HEK293 (cell line): ENCODE measurements at regions of chr9 and their contacts with region 1.

Region 1: DNA sequence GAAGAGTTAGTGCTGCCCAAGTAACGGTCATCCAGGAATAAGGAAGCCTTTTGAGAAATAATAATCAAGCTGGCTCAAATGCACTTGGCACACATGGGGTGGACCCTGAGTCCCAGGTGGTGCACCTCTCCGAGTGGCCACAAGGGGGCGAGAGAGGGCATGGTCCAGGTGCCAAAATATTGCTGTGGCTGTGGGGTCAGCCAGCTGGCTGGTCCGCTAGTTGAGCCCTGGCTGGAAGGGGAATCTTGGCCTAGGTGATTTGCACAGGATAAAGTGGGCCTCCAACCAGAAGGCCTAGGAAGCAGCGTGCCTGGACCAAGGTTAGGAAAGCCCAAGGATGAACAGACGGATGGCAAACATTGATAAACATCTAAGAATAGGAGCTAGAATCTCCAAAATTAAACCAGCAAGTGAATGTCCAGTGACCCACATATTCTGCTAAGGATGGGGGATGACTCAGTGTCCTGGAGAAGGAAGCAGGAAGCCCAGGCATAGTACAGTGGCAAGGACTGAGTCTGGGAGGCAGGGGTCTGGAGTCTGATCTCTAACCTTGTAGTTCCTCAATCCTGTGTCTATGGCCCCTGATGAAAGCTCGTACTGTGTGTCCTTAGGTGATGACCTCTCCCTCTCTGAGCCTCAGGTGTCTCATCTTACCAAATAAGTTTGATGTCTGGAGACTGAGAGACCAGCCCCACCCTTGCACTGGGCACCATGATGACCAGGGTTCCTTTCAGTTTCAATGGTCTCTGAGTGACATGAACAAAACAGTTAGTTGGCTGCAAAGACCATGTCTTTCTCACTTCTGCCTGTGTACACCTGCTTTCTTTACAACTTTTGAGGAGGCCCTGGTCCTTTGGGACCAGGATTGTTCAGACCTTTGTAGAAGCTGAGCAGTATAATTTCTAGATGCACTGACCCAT is 19.2 kb upstream of the SHB start:
- H3K4me3 ChIP-seq: no peak overlapping the region
- H3K27ac ChIP-seq: no peak overlapping the region
- H3K4me1 ChIP-seq: no peaks in the 10 kb centered on the region
- CTCF ChIP-seq: peak; percentile 64

Region 2: GRCh38 chr9:37913480-37914153 is 174.6 kb before region 1 on chr9:
- CTCF ChIA-PET with region 1: interaction called, 66 read pairs
- POLR2A ChIA-PET with region 1: interaction called, 7 read pairs
- H3K4me3 ChIP-seq: no peak overlapping the region
- H3K27ac ChIP-seq: no peak overlapping the region
- H3K4me1 ChIP-seq: no peaks in the 10 kb centered on the region
- CTCF ChIP-seq: peak; percentile 94

Region 3: DNA sequence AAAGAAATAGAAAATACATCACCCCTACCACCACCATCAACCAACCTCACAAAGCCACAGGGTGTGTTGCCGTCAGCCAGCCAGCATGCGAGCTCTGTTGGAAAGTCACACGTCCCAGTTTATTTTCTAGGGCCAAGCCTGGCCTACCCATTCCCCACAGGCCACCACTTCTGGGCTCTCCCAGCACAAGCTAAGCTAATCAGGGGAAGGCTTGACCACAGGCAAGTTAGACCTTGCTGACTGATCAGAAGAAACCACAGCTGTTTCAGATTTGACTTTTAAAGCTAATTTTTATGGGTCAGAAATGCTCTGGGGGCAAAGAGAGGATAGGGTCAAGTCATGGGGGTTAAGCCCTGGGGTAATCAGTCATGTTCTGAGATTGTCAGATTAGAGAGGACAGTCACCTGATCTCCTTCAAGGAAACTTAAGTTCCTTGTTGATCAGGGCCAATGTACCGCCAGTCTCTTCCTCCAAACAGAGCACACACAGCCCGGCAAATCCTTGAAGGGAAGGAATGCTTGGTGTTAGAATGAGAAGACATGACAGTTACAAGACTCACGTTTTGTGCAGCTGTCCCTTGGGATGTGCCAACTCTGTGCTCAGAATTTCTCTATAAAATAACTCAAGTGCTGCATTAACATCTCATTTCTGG is 26.8 kb before region 1 on chr9:
- CTCF ChIA-PET with region 1: no interaction called
- POLR2A ChIA-PET with region 1: no interaction called
- H3K4me3 ChIP-seq: no peak overlapping the region
- H3K27ac ChIP-seq: no peak overlapping the region
- H3K4me1 ChIP-seq: peaks cover 5% of the 10 kb centered on the region
- CTCF ChIP-seq: no peak

Region 4: DNA sequence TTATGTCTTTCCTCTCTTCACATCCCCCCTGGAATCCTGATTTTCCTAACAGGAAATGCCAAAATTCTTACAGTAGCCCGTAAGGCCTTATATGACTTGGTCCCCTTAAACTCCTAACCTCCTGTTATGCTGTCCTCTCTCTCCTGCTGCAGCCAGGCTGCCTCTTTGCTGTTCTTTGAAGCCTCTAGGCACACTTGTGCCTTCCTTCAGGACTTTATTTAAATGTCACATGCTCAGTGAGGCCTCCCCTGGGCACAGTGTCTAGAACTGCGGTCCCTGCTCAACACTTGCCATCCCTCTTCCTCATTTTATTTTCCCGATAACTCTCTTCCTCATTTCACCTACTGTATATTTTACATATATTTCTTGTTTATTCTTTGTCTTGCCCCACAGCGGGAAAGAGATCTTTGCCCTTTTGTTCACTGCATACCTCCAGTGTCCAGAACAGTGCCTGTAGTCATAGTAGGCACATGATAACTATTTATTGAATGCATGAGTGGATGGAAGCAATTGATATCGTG is 13.8 kb before region 1 on chr9:
- CTCF ChIA-PET with region 1: interaction called, 19 read pairs
- POLR2A ChIA-PET with region 1: interaction called, 3 read pairs
- H3K4me3 ChIP-seq: no peak overlapping the region
- H3K27ac ChIP-seq: no peak overlapping the region
- H3K4me1 ChIP-seq: no peaks in the 10 kb centered on the region
- CTCF ChIP-seq: no peak

Region 5: DNA sequence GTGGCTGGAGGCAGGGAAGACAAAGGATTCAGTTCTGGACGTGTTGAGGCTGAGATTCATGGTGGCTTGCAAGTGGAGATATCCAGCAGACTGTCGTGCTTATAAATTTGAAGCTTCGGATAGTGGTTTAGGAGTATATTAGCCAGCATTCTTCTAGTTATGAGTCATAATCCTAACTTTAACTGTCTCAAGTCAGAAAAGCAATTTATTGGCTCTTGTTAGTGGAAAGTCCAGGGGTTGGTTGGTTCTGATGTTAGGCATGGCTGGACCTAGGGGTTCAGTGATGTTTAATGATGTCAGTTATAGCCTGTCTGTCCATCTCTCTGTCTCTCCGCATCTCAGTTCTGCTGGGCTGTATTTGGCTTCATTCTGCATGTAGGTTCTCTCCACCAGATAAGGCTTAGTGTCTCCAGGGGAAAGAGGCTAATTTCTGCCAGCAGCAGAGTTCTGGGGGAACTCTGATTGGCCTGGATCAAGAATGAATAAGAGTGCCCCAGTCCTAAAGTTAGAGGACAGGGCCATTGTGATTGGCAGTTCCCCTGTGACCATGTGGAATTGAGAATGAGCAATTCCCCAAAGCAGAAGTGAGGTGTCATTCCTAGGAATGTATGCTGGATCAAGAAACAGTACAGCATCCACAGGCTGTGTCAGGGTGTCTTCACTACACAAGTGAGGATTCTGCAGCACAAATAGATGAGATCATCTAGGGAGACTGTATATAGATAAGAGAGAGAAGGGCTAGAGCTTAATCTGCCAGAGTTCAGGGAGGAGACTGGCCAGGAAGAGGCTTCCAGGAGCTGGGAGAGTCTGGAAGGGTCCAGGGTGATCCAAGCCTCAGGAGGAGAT is 53.7 kb after region 1 on chr9:
- CTCF ChIA-PET with region 1: interaction called, 19 read pairs
- POLR2A ChIA-PET with region 1: no interaction called
- H3K4me3 ChIP-seq: no peak overlapping the region
- H3K27ac ChIP-seq: no peak overlapping the region
- H3K4me1 ChIP-seq: peaks cover 3% of the 10 kb centered on the region; the same call in 1 of the 2 replicates
- CTCF ChIP-seq: no peak

Region 6: DNA sequence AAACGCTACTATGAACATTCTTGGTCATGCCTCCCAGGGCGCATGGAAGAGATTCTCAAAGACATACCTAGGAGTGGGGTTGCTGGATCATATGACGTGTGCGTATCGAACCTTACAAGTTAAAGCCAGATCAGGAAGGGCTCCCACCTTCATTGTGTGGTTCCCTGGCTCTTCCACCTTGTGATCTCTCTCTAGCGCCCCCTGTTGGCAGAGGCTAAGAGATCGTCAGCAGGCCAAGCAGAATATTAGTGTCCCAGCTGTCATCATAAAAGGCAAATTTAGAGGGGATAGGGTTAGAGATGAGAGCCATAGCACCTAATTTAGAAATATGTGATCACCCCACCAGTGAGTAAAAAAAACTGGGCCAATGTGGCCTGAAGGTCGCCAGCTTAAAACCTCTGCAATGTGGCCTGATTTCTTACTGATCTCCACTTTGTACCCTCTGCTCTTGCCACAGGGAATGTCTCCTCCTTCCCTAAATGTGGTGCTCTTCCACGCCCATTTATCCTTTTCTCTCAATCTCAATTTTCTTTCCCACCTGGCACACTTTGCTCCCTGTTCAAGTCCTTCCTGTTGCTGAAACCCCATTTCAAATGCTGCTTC is 72.4 kb after region 1 on chr9:
- CTCF ChIA-PET with region 1: interaction called, 122 read pairs
- POLR2A ChIA-PET with region 1: no interaction called
- H3K4me3 ChIP-seq: no peak overlapping the region
- H3K27ac ChIP-seq: no peak overlapping the region
- H3K4me1 ChIP-seq: no peaks in the 10 kb centered on the region
- CTCF ChIP-seq: no peak

Region 7: GRCh38 chr9:38362852-38363593 is 274.8 kb after region 1 on chr9:
- CTCF ChIA-PET with region 1: interaction called, 33 read pairs
- POLR2A ChIA-PET with region 1: no interaction called
- H3K4me3 ChIP-seq: no peak overlapping the region
- H3K27ac ChIP-seq: no peak overlapping the region
- H3K4me1 ChIP-seq: no peaks in the 10 kb centered on the region
- CTCF ChIP-seq: no peak; the same call in 1 of the 2 replicates